Heart left ventricle (tissue), 16 donors: ENCODE measurements at regions of chr2 and their contacts with region 1.

Region 1: DNA sequence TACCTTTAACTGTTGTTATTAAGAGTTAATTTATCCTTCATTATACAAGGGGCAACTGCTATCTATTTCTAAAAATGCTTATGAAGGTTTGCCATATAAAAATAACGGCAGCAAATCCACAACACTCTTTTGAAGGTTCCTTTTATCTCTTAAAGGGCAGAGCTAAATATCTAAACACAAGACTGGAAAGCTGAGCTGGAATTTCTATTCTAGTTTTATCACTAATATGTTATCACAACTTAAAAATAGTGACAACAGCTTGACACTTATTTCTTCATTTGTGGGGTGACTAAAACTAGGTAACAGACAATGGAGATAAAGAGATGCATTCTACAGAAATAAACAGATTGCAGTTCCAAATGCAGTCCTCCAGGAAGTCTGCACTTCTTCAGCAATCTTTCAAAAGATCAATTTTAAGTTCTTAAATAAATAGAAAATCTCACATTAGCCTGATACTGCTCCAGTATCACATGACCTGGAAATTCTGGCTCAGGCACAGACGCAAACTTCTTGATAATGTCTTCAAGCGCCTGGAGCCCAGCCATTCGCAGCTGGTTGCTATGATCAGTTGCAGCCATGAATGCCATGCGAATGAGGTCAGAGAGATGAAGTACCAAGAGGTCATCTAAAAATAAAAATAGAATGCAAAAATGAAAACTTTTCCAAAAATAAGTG is 54.0 kb upstream of the STRN start:
- DNase-seq: peak; percentile 80 to 94 (median 88)
- ATAC-seq: peak; percentile 89 to 94 (median 94)
- H3K4me3 ChIP-seq: peak overlapping the region in 1 of 12 donors; percentile 28
- H3K27ac ChIP-seq: peak overlapping the region; percentile 63 to 92 (median 81)
- H3K4me1 ChIP-seq: peaks cover 0 to 25% (median 13%) of the 10 kb centered on the region in 12 donors
- H3K27me3 ChIP-seq: no peaks in the 10 kb centered on the region
- CTCF ChIP-seq: no peak
- POLR2A ChIP-seq: no peak

Region 2: GRCh38 chr2:36835125-36835524 is 185.2 kb before region 1 on chr2:
- intact Hi-C with region 1: no loop called
- DNase-seq: no peak
- ATAC-seq: no peak
- H3K4me3 ChIP-seq: no peak overlapping the region
- H3K27ac ChIP-seq: peak overlapping the region in 1 of 12 donors; percentile 13
- H3K4me1 ChIP-seq: no peaks in the 10 kb centered on the region
- H3K27me3 ChIP-seq: no peaks in the 10 kb centered on the region
- CTCF ChIP-seq: no peak
- POLR2A ChIP-seq: no peak

Region 3: DNA sequence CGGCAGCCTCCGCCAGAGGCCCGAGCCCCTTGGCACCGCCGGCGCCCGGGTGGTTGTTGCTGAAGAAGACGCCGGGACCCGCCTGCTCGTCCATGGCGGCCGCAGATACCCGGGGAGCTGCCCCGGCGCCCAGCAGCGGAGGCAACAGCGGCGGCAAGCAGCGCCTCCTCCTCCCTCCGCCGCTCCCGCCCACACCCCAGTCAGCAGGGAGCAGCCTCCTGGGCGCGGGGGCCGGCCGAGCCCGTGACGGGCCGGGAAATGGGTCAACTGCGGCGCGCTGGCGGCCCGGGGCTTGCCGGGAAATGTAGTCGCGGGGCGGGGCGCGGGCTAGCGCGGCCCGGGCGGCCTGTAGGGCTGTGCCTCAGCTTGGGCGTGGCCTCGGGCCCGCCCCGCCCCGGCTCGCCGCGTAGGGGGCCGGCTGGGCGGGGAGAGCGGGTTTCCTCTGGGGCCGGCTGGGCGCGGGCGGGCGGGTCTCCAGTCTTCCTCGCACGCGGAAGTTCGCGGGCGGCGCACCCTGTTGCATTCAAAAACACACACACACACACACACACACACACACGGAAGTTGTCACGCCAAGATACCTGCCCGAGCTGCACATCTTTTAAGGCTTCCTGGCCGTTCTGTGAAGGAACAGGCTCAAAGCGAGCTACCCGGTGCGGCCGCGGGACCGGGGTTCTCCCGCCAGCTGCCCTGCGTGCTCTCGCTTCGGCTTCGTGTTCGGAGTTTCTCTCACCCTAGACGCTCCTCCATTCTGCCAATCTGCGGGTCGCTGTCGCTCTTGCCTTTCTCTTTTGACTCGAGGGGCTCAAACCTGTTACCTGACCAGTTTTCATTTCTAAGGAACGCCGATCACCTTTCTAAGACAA is 53.7 kb before region 1 on chr2 and contains the start of gene STRN:
- intact Hi-C with region 1: loop called in 3 of 10 experiments (anchors 2 to 5 kb)
- DNase-seq: peak; percentile 98 to 99 (median 98)
- ATAC-seq: peak; percentile 95 to 98 (median 96)
- H3K4me3 ChIP-seq: peak within 1 kb of the TSS; percentile 75 to 100 (median 92)
- H3K27ac ChIP-seq: peak within 1 kb of the TSS; percentile 84 to 100 (median 96)
- H3K4me1 ChIP-seq: peaks cover 0 to 48% (median 37%) of the 10 kb centered on the region in 12 donors
- H3K27me3 ChIP-seq: no peaks in the 10 kb centered on the region
- CTCF ChIP-seq: peak in 1 of 12 donors; percentile 4
- POLR2A ChIP-seq: peak; percentile 19 to 94
- total RNA-seq, gene STRN: 39.6 to 101 (median 62.8) TPM

Region 4: GRCh38 chr2:37376421-37377186 is 356.3 kb after region 1 on chr2:
- intact Hi-C with region 1: no loop called
- DNase-seq: peak in 1 of 5 donors; percentile 34
- ATAC-seq: peak in 3 of 4 donors; percentile 10 to 64 (median 28)
- H3K4me3 ChIP-seq: peak overlapping the region in 3 of 12 donors; percentile 0 to 19 (median 11)
- H3K27ac ChIP-seq: peak overlapping the region in 1 of 12 donors; percentile 72
- H3K4me1 ChIP-seq: no peaks in the 10 kb centered on the region
- H3K27me3 ChIP-seq: no peaks in the 10 kb centered on the region
- CTCF ChIP-seq: no peak
- POLR2A ChIP-seq: no peak